ENCODE measurements at regions of chr3 and their contacts with region 1.

Region 1: GRCh38 chr3:10945683-10946287 is 46.8 kb upstream of the SLC6A1 start:
- DNase-seq: peak; percentile 92
- H3K4me3 ChIP-seq: peak overlapping the region in 1 of 2 experiments; percentile 42; a peak in 1 of 4 replicates
- H3K27ac ChIP-seq: no peak overlapping the region
- H3K4me1 ChIP-seq: peaks cover 0 to 2% of the 10 kb centered on the region in 2 experiments; a peak in 1 of 4 replicates
- H3K27me3 ChIP-seq: no peaks in the 10 kb centered on the region
- CTCF ChIP-seq: peak; percentile 80
- EP300 ChIP-seq: no peak
- RAD21 ChIP-seq: peak; percentile 76

Region 2: GRCh38 chr3:10758304-10759061 is 187.3 kb before region 1 on chr3:
- CTCF ChIA-PET with region 1: interaction called, 20 read pairs
- POLR2A ChIA-PET with region 1: no interaction called
- DNase-seq: peak; percentile 86
- H3K4me3 ChIP-seq: no peak overlapping the region
- H3K27ac ChIP-seq: no peak overlapping the region
- H3K4me1 ChIP-seq: no peaks in the 10 kb centered on the region; a peak in 1 of 4 replicates
- H3K27me3 ChIP-seq: no peaks in the 10 kb centered on the region
- CTCF ChIP-seq: peak; percentile 67
- EP300 ChIP-seq: no peak
- RAD21 ChIP-seq: peak; percentile 94

Region 3: DNA sequence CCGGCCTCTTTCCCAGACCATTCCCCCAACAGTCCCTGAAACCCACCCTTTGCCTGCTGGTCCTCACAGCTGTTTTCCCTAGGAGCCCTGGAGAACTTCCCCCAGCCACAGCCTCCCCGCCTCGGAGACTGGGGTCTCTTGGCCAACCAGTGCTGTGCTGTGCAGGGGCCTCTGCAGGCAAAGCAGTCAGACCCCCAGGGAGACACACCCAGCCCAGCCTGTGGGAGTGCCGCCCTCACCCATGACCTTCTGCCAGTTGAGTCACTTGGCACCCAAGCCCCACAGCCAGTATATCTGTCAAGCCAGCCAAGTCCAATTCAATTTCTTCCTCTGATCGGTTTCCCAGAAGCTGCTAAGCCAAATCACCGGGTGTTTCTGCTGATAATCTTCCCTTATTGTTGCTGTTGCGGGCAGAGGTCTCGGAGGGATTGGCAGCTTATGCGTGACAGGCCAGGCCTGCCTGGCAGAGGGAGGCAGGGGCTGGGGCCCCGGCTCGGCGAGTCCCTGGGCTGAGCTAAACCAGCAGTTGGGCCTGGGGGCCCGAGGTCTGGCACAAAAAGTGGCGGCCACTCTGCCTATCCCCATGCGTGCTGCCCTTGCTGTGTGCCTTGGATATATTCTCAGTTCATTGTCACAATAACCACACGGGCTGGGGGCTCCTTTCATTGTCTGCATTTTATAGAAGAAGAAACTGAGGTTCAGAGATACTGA is 18.8 kb before region 1 on chr3:
- CTCF ChIA-PET with region 1: interaction called, 11 read pairs
- POLR2A ChIA-PET with region 1: no interaction called
- DNase-seq: no peak
- H3K4me3 ChIP-seq: no peak overlapping the region
- H3K27ac ChIP-seq: peak overlapping the region in 1 of 2 experiments; percentile 79; a peak in 2 of 4 replicates
- H3K4me1 ChIP-seq: peaks cover 0 to 34% of the 10 kb centered on the region in 2 experiments; a peak in 1 of 4 replicates
- H3K27me3 ChIP-seq: no peaks in the 10 kb centered on the region
- CTCF ChIP-seq: no peak
- EP300 ChIP-seq: no peak
- RAD21 ChIP-seq: no peak

Region 4: DNA sequence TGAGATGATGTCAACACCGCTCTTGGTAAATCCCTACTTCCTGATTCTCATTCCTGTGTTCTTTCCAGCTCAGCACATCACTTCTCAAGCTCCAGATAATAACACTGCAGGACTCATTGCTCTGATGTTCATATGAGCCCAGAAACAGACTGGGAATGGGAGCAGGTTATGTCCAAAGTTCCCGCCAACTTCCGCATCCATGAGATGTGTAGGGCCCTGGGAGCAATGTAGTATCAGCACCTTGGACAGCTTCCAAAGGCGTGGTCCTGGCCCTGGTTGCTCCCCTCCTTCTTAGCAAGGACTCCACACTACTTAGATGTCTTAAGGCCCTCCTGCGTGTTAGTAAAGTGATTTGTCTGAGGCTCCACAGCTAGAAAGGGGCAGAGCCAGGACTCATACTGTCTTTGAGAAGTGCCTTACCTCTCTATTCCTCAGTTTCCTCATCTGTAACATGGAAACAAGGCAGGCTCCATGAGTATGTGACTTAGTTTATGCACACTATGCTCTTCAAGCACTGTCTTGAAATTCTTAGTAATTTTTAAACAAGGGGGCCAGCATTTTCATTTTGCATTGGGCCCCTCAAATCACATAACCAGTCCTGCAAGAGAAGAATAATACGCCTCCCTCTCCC is 18.9 kb after region 1 on chr3:
- CTCF ChIA-PET with region 1: interaction called, 83 read pairs
- POLR2A ChIA-PET with region 1: no interaction called
- DNase-seq: no peak
- H3K4me3 ChIP-seq: no peak overlapping the region
- H3K27ac ChIP-seq: no peak overlapping the region
- H3K4me1 ChIP-seq: peaks cover 0 to 7% of the 10 kb centered on the region in 2 experiments; a peak in 1 of 4 replicates
- H3K27me3 ChIP-seq: no peaks in the 10 kb centered on the region
- CTCF ChIP-seq: no peak
- EP300 ChIP-seq: no peak
- RAD21 ChIP-seq: no peak

Region 5: DNA sequence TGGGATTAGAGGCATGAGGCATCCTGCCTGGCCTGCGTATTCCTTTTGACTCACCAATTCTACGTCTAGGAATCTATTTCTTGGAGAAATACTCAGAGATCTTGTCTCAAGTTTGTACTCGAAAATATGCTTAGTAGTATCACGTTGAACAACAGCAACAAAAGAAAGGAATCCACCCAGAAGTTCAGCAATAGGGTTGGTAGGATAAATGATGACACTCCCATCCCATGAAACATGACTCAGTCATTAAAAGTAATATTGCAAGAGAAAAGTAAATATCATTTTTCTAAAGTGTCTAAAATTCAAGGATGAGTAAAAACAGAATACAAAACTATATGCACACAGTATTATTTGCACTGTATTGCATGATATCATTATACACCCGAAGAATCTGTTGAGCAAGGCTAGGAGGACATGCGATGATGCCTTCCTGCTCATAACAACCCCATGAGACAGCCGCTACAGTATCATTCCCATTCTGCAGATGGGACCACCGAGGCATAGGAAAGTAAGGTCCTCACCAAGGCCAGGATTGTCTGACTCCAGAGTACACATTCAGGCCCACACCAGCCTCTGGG is 108.2 kb after region 1 on chr3:
- CTCF ChIA-PET with region 1: interaction called, 281 read pairs
- POLR2A ChIA-PET with region 1: interaction called, 6 read pairs
- DNase-seq: no peak
- H3K4me3 ChIP-seq: no peak overlapping the region
- H3K27ac ChIP-seq: no peak overlapping the region
- H3K4me1 ChIP-seq: no peaks in the 10 kb centered on the region
- H3K27me3 ChIP-seq: peaks cover 24% of the 10 kb centered on the region; the same call in 1 of the 2 replicates
- CTCF ChIP-seq: no peak
- EP300 ChIP-seq: no peak
- RAD21 ChIP-seq: no peak

Region 6: GRCh38 chr3:11099306-11099705 is 153.5 kb after region 1 on chr3:
- CTCF ChIA-PET with region 1: no interaction called
- POLR2A ChIA-PET with region 1: no interaction called
- DNase-seq: no peak
- H3K4me3 ChIP-seq: no peak overlapping the region
- H3K27ac ChIP-seq: no peak overlapping the region
- H3K4me1 ChIP-seq: peaks cover 6 to 14% of the 10 kb centered on the region in 2 experiments; a peak in 1 of 4 replicates
- H3K27me3 ChIP-seq: no peaks in the 10 kb centered on the region
- CTCF ChIP-seq: no peak
- EP300 ChIP-seq: no peak
- RAD21 ChIP-seq: no peak

Measured in SK-N-SH (cell line).